Heart left ventricle (tissue), 16 donors: ENCODE measurements at regions of chr14 and their contacts with region 1.

Region 1: GRCh38 chr14:103730490-103731035 is 15.0 kb downstream of the ZFYVE21 start:
- DNase-seq: peak; percentile 71 to 90 (median 80)
- ATAC-seq: peak; percentile 83 to 91 (median 85)
- H3K4me3 ChIP-seq: no peak overlapping the region
- H3K27ac ChIP-seq: peak overlapping the region in 6 of 12 donors; percentile 23 to 64 (median 42)
- H3K4me1 ChIP-seq: peaks cover 0 to 37% (median 12%) of the 10 kb centered on the region in 12 donors
- H3K27me3 ChIP-seq: no peaks in the 10 kb centered on the region
- CTCF ChIP-seq: peak in 1 of 12 donors; percentile 12
- POLR2A ChIP-seq: no peak

Region 2: GRCh38 chr14:103763730-103764488 is 33.3 kb after region 1 on chr14:
- intact Hi-C with region 1: no loop called
- DNase-seq: no peak
- ATAC-seq: no peak
- H3K4me3 ChIP-seq: no peak overlapping the region
- H3K27ac ChIP-seq: no peak overlapping the region
- H3K4me1 ChIP-seq: peaks cover 0 to 11% (median 2%) of the 10 kb centered on the region in 12 donors
- H3K27me3 ChIP-seq: no peaks in the 10 kb centered on the region
- CTCF ChIP-seq: no peak
- POLR2A ChIP-seq: no peak

Region 3: GRCh38 chr14:103801459-103801858 is 70.9 kb after region 1 on chr14:
- intact Hi-C with region 1: no loop called
- DNase-seq: no peak
- ATAC-seq: peak in 3 of 4 donors; percentile 57 to 84 (median 81)
- H3K4me3 ChIP-seq: no peak overlapping the region
- H3K27ac ChIP-seq: no peak overlapping the region
- H3K4me1 ChIP-seq: peaks cover 0 to 47% (median 21%) of the 10 kb centered on the region in 12 donors
- H3K27me3 ChIP-seq: no peaks in the 10 kb centered on the region
- CTCF ChIP-seq: no peak
- POLR2A ChIP-seq: no peak

Region 4: DNA sequence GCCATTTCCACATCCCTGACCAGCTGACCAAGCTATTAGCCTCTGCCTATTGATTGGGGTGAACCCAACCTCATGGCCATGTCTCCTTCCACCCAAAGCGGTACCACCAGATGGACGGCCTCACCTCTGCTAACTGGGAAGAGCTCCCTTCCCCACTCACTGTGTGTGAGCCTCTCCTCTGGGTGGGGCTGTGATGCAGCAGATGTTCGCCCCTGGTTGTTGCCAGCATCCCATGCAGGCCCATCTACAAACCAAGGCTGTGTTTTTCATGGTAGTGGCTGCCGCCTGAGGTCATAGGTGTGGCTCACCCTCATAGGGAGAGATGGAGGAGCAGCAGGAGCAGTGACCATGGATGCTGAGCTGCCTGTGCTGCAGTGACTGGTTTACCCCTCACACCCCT is 259.4 kb after region 1 on chr14:
- intact Hi-C with region 1: loop called in 1 of 10 experiments (anchors 10 kb)
- DNase-seq: no peak
- ATAC-seq: no peak
- H3K4me3 ChIP-seq: no peak overlapping the region
- H3K27ac ChIP-seq: no peak overlapping the region
- H3K4me1 ChIP-seq: no peaks in the 10 kb centered on the region
- H3K27me3 ChIP-seq: peaks cover 0 to 9% (median 0%) of the 10 kb centered on the region in 9 donors
- CTCF ChIP-seq: no peak
- POLR2A ChIP-seq: no peak